ENCODE measurements at regions of chr14 and their contacts with region 1.

Region 1: DNA sequence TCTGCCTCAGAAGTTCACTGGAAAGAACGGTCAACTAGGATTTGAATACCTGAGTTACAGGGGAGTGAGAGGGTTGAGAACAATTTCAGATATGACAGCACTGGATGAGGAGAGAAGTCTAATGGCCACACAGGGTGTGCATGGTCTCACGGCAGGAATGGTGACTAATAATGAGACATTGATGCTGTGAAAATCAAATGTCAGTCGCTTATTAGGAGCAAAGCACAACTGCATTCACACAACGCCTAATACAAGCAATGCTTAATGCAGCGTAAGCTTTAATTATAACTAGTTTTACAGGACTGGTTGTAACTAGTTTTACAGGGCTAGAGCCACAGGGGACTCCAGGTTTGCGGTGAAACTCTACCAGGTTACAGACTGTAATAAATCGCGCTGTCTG is 23.4 kb upstream of the PRIMA1 start:
- DNase-seq: no peak
- H3K4me3 ChIP-seq: no peak overlapping the region
- H3K27ac ChIP-seq: no peak overlapping the region
- H3K4me1 ChIP-seq: no peaks in the 10 kb centered on the region
- H3K27me3 ChIP-seq: no peaks in the 10 kb centered on the region
- CTCF ChIP-seq: no peak

Region 2: GRCh38 chr14:93219103-93219726 is 592.5 kb before region 1 on chr14:
- CTCF ChIA-PET with region 1: no interaction called
- POLR2A ChIA-PET with region 1: no interaction called
- intact Hi-C with region 1: no loop called
- DNase-seq: peak; percentile 70
- H3K4me3 ChIP-seq: no peak overlapping the region
- H3K27ac ChIP-seq: no peak overlapping the region
- H3K4me1 ChIP-seq: no peaks in the 10 kb centered on the region
- H3K27me3 ChIP-seq: no peaks in the 10 kb centered on the region
- CTCF ChIP-seq: peak; percentile 73

Region 3: DNA sequence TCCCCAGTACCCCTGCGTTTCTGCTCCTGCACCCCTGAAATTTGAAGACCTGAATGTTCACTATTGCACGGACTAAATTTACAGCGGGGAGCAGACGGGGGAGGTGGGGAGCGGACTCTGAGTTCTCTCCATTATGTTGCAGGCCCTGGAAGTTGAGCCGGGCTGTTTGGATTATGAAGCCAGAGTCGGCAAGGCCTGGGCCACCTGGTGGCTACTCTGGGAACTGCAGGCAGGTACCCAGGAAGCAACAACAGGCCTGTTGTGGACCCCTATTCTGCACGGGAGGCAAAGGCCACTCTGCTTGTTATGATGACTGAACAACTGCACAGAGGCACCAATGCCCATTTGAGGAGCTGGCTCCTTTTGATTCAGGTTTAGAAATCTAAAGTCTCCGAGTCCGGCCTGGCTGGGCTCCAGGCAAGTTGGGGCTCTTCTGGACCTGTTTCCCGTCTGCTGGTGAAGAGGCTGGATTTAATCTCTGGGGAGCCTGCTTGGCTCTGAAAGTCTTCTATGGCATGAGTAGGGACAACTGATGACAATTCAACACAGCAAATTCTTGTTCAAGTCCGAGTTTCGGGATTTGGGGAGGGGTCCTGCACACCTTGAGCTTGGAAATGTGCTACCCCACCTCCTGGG is 81.4 kb after region 1 on chr14:
- CTCF ChIA-PET with region 1: no interaction called
- POLR2A ChIA-PET with region 1: interaction called, 11 read pairs
- intact Hi-C with region 1: no loop called
- DNase-seq: peak; percentile 70
- H3K4me3 ChIP-seq: no peak overlapping the region
- H3K27ac ChIP-seq: no peak overlapping the region
- H3K4me1 ChIP-seq: no peaks in the 10 kb centered on the region
- H3K27me3 ChIP-seq: peaks cover 28% of the 10 kb centered on the region
- CTCF ChIP-seq: peak; percentile 97

Region 4: DNA sequence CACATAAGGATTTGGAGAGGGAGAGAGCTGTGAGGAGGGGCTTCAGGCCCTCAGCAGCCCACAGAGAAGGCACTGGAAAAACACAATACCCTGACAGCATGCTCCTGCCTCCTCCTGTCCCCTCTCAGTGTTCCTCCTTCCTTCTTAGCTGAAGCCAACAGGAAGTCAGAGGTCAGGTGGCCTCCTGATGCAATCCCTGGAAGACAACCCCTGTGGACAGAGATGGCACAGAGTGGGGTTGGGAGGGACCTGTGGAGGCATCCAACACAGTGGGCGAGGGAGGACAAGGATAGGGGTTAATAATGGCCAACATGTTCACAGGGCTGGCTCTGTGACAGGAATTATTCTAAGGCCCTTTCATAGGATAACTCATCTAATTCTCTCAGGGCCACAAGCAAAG is 333.1 kb after region 1 on chr14:
- CTCF ChIA-PET with region 1: no interaction called
- POLR2A ChIA-PET with region 1: no interaction called
- intact Hi-C with region 1: no loop called
- DNase-seq: no peak
- H3K4me3 ChIP-seq: no peak overlapping the region
- H3K27ac ChIP-seq: no peak overlapping the region
- H3K4me1 ChIP-seq: no peaks in the 10 kb centered on the region
- H3K27me3 ChIP-seq: no peaks in the 10 kb centered on the region
- CTCF ChIP-seq: no peak